ENCODE measurements at regions of chr19 and their contacts with region 1.

Region 1: GRCh38 chr19:39412100-39412866 is at the start of gene PLEKHG2:
- DNase-seq: peak; percentile 95
- H3K4me3 Mint-ChIP-seq: peak within 1 kb of the TSS; percentile 96
- H3K27ac Mint-ChIP-seq: peak within 1 kb of the TSS; percentile 86
- H3K4me1 Mint-ChIP-seq: peaks cover 46% of the 10 kb centered on the region
- H3K27me3 Mint-ChIP-seq: no peaks in the 10 kb centered on the region
- total RNA-seq, gene PLEKHG2: 43.9 and 47.3 TPM in 2 replicates

Region 2: DNA sequence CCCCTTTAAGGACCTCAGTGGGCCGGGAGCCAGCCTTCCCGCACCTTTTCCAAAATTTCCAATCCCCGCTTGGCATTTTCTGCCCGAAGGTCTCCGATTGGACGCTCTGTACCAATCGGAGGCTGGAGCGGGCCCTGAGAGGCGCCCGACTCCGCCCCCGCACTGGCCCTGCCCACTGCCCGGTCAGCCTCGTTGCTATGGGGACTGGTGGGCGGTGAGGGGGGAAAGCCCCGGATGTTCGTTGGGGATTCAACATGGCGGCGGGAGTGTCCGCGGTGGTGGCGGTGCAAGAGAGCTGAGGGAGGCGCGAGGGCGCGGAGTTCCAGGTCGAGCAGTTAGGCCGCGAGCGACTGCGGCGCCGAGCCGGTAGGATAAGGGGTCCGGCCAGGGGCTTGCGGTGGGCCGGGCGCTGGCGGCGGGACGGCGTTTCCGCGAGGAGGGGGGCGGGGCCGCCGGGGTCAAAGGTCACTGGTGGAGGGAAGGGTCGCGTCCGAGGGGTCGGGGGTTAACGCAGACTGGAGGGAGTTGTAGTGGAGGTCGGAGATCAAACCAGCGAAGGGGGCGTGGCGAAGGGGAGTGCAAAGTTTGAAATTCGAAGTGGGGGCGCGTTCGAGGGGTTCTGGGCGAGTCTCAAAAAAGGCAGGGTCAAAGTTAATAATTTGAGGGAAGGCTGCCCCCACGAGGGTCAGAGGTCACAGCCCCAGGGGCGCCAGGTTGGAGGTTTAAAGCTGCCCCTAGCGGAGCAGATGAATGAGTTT is 286.6 kb before region 1 on chr19 and contains the start of gene PAK4:
- intact Hi-C with region 1: loop called (anchors 1 kb)
- DNase-seq: peak; percentile 97
- H3K4me3 Mint-ChIP-seq: peak within 1 kb of the TSS; percentile 99
- H3K27ac Mint-ChIP-seq: peak within 1 kb of the TSS; percentile 99
- H3K4me1 Mint-ChIP-seq: peaks cover 45% of the 10 kb centered on the region
- H3K27me3 Mint-ChIP-seq: peaks cover 6% of the 10 kb centered on the region
- total RNA-seq, gene PAK4: 18.5 and 19.9 TPM in 2 replicates

Region 3: GRCh38 chr19:39335168-39335548 is 77.1 kb before region 1 on chr19:
- intact Hi-C with region 1: loop called (anchors 1 kb)
- DNase-seq: no peak
- H3K4me3 Mint-ChIP-seq: peak overlapping the region; percentile 96
- H3K27ac Mint-ChIP-seq: peak overlapping the region; percentile 96
- H3K4me1 Mint-ChIP-seq: peaks cover 62% of the 10 kb centered on the region
- H3K27me3 Mint-ChIP-seq: no peaks in the 10 kb centered on the region

Region 4: DNA sequence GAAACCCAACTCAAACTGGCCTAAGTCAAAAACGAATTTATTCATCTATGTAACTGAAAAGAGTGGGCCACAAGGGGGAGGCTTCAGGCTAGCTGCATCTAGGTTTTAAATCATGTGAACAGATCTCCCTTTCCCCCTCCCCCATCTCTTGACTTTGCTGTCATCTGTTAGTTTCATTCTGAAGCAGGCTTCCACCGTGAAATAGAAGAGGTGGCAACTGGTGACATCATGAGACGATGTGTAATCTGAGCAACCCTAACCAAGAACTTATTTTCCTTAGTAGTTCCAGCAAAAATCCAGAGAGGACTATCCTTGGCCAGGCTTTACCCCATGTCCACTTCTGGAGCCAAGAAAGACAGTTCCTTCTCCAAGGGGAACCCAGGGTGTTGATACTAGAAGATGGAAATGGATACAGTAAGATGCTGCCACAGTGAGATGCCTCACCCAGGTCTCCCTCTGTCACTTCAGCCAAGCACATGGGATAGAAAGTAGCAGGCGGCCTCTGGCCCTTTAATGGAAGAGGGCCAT is 60.7 kb before region 1 on chr19:
- intact Hi-C with region 1: loop called (anchors 1 kb)
- DNase-seq: peak; percentile 61
- H3K4me3 Mint-ChIP-seq: peak overlapping the region; percentile 32
- H3K27ac Mint-ChIP-seq: peak overlapping the region; percentile 87
- H3K4me1 Mint-ChIP-seq: peaks cover 51% of the 10 kb centered on the region
- H3K27me3 Mint-ChIP-seq: no peaks in the 10 kb centered on the region

Region 5: DNA sequence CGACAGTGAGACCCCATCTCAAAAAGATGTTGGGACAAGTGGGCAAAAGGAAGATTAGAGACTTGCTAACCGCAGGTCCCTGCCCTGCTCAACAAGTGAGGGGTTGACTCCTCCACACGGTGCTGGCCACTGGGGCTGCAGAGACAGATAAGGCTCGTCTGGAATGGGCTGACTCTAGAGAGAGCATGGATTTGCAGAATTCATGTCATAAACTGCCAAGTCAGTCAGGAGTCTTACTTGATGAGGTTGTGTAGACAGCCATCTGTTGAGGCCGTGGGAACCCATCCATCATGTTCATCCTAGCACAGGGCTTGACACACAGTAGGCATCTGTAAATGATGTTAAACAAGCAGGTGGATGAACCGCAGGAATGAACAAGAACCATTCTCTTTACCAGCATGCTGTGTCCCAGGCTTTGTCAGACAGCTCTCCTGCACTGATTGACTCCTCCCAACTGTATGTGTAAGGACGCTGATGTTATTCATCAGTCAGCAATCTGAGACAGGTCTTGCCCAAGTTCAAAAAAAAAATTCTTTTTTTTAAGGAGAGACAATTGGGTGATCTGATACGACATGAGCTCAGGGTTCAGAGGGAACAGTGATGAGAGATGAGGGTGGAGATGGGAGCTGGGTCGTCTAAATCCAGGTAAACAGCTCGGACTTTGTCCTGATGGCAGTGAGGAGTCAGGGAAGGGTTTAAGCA is 30.2 kb before region 1 on chr19:
- intact Hi-C with region 1: no loop called
- DNase-seq: no peak
- H3K4me3 Mint-ChIP-seq: no peak overlapping the region
- H3K27ac Mint-ChIP-seq: no peak overlapping the region
- H3K4me1 Mint-ChIP-seq: no peaks in the 10 kb centered on the region
- H3K27me3 Mint-ChIP-seq: no peaks in the 10 kb centered on the region

Region 6: GRCh38 chr19:39397360-39398296 is 14.7 kb before region 1 on chr19:
- intact Hi-C with region 1: loop called (anchors 1 kb)
- DNase-seq: peak; percentile 88
- H3K4me3 Mint-ChIP-seq: no peak overlapping the region
- H3K27ac Mint-ChIP-seq: peak overlapping the region; percentile 67
- H3K4me1 Mint-ChIP-seq: peaks cover 58% of the 10 kb centered on the region
- H3K27me3 Mint-ChIP-seq: no peaks in the 10 kb centered on the region

Region 7: GRCh38 chr19:39445265-39446111 is 33.2 kb after region 1 on chr19 and contains the start of gene SUPT5H:
- intact Hi-C with region 1: loop called (anchors 1 kb)
- DNase-seq: peak; percentile 97
- H3K4me3 Mint-ChIP-seq: peak within 1 kb of the TSS; percentile 91
- H3K27ac Mint-ChIP-seq: peak within 1 kb of the TSS; percentile 94
- H3K4me1 Mint-ChIP-seq: peaks cover 41% of the 10 kb centered on the region
- H3K27me3 Mint-ChIP-seq: no peaks in the 10 kb centered on the region
- total RNA-seq, gene SUPT5H: 200 and 203 TPM in 2 replicates

Region 8: DNA sequence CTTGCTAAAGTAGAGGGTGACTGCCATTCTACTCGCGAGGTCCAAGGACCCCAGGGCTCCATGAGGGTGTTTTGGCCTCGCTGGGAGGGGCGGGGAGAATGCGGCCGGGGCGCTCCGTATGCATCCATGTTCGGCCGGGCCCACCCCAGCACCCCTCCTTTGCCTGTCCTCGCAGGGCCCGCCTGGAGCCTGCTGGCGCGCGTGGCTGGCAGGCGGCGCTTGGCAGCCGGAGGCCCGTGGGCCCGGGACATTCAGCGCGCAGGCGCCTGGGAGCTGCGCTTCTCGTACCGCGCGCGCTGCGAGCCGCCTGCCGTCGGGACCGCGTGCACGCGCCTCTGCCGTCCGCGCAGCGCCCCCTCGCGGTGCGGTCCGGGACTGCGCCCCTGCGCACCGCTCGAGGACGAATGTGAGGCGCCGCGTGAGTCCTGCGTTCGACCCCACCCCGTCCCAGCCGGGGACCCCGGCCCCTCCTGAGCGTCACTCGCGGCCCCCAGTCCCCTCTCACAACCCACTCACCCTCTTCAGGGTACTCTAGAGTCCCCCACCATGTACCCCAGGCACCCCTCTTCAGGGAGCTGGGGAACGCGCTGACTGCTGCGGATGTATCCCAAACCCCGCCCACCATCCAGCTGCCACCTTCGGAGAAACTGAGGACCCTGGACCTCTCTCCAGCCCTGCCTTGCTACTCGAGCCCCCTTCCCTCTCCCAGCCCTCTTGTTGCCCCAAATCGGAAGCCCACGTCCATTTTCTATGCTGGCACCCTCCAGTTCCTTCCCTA is 90.5 kb after region 1 on chr19:
- intact Hi-C with region 1: loop called (anchors 1 kb)
- DNase-seq: peak; percentile 76
- H3K4me3 Mint-ChIP-seq: no peak overlapping the region
- H3K27ac Mint-ChIP-seq: no peak overlapping the region
- H3K4me1 Mint-ChIP-seq: peaks cover 27% of the 10 kb centered on the region
- H3K27me3 Mint-ChIP-seq: peaks cover 70% of the 10 kb centered on the region

Measured in activated T-helper 1 cell treated with anti-CD3 and anti-CD28 coated beads, Interleukin-12 subunit alpha, Interleukin-12 subunit beta, Interleukin-2, Interleukin-4 antibody, amounts not matched to agents 30 ng/mL and 10 ng/mL and 1 ng/mL, durations not matched to agents 14 hours and 24 hours and 36 hours (primary cell).